Caco-2 (cell line): ENCODE measurements at regions of chr3 and their contacts with region 1.

Region 1: GRCh38 chr3:158539414-158540014 is 31.5 kb upstream of the MLF1 start:
- DNase-seq: peak in 1 of 2 experiments; percentile 55
- H3K4me3 ChIP-seq: no peak overlapping the region
- H3K4me3 Mint-ChIP-seq: no peak overlapping the region
- H3K27ac Mint-ChIP-seq: no peak overlapping the region
- H3K4me1 ChIP-seq: no peaks in the 10 kb centered on the region
- H3K4me1 Mint-ChIP-seq: no peaks in the 10 kb centered on the region
- H3K27me3 ChIP-seq: no peaks in the 10 kb centered on the region
- H3K27me3 Mint-ChIP-seq: no peaks in the 10 kb centered on the region
- CTCF ChIP-seq: peak; percentile 48 to 66

Region 2: DNA sequence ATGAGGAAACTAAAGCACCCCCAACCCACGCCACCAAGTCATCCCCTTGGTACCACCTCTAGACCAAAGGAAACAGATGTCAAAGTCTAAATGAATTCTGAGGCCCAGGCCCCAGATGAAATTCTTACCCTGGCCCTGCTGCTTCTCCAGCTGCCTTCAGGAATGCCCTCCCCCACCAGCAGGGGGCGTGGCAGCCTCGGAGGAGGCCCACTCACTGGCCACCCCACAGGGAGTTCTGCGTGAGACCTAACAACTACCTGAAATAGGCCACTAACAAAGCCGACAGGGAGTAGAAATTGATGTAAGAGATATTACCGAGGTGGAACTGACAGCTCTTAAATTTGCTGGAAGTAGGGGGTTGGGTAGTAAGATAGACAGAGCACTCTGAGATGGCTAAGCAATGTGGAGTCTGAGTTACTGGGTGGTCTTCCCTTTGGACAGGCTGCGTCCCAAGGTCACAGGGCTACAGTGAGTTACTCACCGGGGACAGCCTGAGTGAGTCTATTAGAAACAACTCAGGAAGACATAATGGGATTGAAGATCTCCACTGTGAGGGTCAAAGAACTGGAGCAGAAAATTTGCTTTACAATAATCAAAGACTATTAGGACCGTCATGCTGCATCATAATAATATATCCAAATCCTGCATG is 674.0 kb before region 1 on chr3:
- CTCF ChIA-PET with region 1: no interaction called
- POLR2A ChIA-PET with region 1: no interaction called
- intact Hi-C with region 1: loop called (anchors 10 kb)
- DNase-seq: peak; percentile 53 to 74
- H3K4me3 ChIP-seq: no peak overlapping the region
- H3K4me3 Mint-ChIP-seq: no peak overlapping the region
- H3K27ac Mint-ChIP-seq: no peak overlapping the region
- H3K4me1 ChIP-seq: no peaks in the 10 kb centered on the region
- H3K4me1 Mint-ChIP-seq: no peaks in the 10 kb centered on the region
- H3K27me3 ChIP-seq: no peaks in the 10 kb centered on the region
- H3K27me3 Mint-ChIP-seq: peaks cover 4% of the 10 kb centered on the region
- CTCF ChIP-seq: peak; percentile 74 to 85